ENCODE measurements at regions of chr2 and their contacts with region 1.

Region 1: DNA sequence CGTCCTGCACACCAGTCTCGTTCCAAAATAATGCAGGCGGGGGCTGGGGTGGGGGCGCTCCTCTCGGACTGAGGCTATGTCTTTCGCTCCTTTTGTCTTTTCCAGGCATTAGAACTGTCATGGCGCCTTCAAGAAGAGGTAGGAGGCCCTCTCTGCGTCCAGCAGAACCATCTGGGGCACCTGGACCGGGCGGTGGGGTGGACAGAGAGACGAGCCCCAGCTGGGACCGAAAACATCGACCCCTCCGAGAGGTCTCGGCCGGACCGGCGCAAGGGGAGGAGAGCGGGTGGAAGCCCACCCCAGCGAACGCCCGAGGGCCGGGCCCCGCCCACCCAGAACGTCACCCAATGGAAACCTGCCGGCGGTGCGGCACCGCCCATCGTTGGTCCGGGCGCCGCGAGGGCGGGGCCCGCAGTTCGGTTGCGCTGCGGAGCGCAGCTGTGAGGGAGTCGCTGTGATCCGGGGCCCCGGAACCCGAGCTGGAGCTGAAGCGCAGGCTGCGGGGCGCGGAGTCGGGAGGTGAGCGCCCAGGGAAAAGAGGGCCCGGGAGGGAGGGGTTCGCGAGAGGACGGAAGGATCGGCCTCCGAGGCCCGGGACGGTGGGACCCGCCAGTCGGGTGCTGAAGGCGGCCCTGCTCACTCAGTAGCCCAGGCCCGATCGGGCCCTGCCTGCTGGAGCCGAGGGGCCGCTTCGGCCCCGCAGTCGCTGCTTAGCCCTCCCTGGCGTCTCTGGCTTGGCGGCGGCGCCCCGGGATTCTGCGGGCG is at the start of gene NRBP1:
- DNase-seq: peak; percentile 91
- H3K4me3 Mint-ChIP-seq: peak within 1 kb of the TSS; percentile 98
- H3K27ac Mint-ChIP-seq: peak within 1 kb of the TSS; percentile 98
- H3K4me1 Mint-ChIP-seq: peaks cover 25% of the 10 kb centered on the region
- H3K27me3 Mint-ChIP-seq: no peaks in the 10 kb centered on the region
- total RNA-seq, gene NRBP1: 98.0 and 106 TPM in 2 replicates

Region 2: DNA sequence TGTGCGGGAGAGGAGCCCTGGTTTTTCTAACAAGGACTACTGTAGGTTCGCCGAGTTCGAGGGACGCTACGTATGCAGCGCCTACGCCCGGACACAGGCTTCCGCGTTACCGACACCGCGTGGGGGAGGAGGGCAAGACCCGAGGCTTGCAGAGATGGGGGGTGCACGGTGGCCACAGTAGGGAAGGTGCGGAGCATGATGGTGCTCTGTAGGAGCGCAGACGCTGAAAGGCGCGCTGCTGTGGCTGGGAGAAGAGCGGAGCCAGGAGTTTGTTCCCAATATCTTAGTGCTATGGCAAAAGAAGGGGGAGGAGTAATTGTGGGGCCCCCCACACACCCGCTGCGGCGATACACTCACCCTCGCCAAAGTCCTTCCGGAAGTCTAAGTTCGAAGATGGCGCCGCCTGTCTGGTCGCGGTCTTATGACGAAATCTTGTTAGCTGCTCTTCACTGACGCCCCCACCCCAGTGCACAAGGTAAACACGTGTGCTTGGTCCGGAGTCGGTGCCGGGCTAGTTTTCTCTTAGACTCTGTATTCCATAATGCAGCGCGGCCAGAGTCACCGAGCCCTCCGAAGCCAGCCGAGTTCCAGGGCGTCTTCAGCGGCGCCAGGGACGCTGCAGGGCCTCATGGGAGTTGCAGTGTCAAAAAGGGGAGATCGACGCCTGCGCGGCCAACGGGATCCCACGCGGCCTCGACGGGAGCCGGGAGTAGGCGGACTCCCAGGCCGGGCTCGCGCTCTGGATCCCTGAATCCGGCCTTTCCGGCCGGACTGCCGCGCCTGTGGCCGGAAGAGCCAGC is 71.8 kb before region 1 on chr2 and contains the start of gene GTF3C2:
- intact Hi-C with region 1: loop called (anchors 1 kb)
- DNase-seq: peak; percentile 90
- H3K4me3 Mint-ChIP-seq: peak within 1 kb of the TSS; percentile 100
- H3K27ac Mint-ChIP-seq: peak within 1 kb of the TSS; percentile 98
- H3K4me1 Mint-ChIP-seq: peaks cover 31% of the 10 kb centered on the region
- H3K27me3 Mint-ChIP-seq: no peaks in the 10 kb centered on the region
- total RNA-seq, gene GTF3C2: 65.8 and 66.9 TPM in 2 replicates

Region 3: GRCh38 chr2:27409321-27410073 is 18.9 kb before region 1 on chr2 and contains the start of gene PPM1G:
- intact Hi-C with region 1: loop called (anchors 1 kb)
- DNase-seq: peak; percentile 96
- H3K4me3 Mint-ChIP-seq: peak within 1 kb of the TSS; percentile 89
- H3K27ac Mint-ChIP-seq: peak within 1 kb of the TSS; percentile 88
- H3K4me1 Mint-ChIP-seq: peaks cover 20% of the 10 kb centered on the region
- H3K27me3 Mint-ChIP-seq: peaks cover 3% of the 10 kb centered on the region
- total RNA-seq, gene PPM1G: 159 and 163 TPM in 2 replicates

Region 4: DNA sequence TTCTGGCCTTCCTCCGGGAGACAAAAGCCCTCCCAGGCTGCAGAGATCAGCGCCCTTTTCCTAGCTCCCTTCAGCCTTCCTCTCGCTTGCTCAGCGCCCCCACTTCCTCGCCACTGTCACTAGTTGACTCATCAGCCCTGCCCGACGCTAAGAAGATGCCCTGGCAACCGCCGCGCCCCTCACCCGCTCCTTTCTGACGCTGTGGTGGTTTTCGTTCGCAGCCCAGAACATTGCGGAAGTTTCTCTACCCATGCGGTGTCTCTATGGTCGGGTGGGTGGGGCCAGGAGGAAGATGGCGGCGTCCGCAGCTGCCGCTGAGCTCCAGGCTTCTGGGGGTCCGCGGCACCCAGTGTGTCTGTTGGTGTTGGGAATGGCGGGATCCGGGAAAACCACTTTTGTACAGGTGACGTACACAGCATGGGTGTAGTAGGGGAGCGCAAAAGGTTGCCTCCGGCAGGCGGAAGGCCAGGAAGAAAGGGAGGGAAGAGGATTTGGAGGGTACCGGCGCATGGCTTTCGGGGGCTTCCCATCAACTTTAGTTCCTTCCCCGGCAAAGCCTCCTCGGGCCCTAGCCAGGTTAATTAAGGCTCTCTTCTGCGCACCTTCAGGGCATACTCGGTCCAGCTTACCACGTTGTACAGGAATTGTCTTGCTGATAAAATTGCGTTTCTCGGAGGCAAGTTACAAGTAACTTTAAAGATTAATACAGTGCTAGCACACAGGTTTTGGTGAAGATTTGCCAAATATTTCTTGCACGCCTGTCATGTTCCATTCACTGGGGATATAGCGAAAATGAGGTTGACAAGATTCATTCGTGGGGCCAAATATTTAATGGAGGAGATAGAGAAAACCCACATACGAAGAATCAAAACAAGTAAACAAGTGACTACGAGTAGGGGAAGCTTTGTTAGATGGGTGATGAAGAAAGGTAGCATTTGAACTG is 200.6 kb after region 1 on chr2 and contains the starts of genes CCDC121 and GPN1:
- intact Hi-C with region 1: loop called (anchors 2 kb)
- DNase-seq: peak; percentile 95
- H3K4me3 Mint-ChIP-seq: no peak within 1 kb of the TSS
- H3K27ac Mint-ChIP-seq: peak within 1 kb of the TSS; percentile 38
- H3K4me1 Mint-ChIP-seq: peaks cover 29% of the 10 kb centered on the region
- H3K27me3 Mint-ChIP-seq: no peaks in the 10 kb centered on the region
- total RNA-seq, gene CCDC121: 0.57 and 0.73 TPM in 2 replicates
- total RNA-seq, gene GPN1: 54.3 and 55.9 TPM in 2 replicates

Region 5: GRCh38 chr2:27683390-27684071 is 255.1 kb after region 1 on chr2:
- intact Hi-C with region 1: loop called (anchors 5 kb)
- DNase-seq: peak; percentile 78
- H3K4me3 Mint-ChIP-seq: no peak overlapping the region
- H3K27ac Mint-ChIP-seq: peak overlapping the region; percentile 77
- H3K4me1 Mint-ChIP-seq: peaks cover 31% of the 10 kb centered on the region
- H3K27me3 Mint-ChIP-seq: no peaks in the 10 kb centered on the region

Region 6: GRCh38 chr2:27752551-27753237 is 324.3 kb after region 1 on chr2:
- intact Hi-C with region 1: no loop called
- DNase-seq: no peak
- H3K4me3 Mint-ChIP-seq: no peak overlapping the region
- H3K27ac Mint-ChIP-seq: no peak overlapping the region
- H3K4me1 Mint-ChIP-seq: peaks cover 2% of the 10 kb centered on the region
- H3K27me3 Mint-ChIP-seq: peaks cover 10% of the 10 kb centered on the region

Region 7: DNA sequence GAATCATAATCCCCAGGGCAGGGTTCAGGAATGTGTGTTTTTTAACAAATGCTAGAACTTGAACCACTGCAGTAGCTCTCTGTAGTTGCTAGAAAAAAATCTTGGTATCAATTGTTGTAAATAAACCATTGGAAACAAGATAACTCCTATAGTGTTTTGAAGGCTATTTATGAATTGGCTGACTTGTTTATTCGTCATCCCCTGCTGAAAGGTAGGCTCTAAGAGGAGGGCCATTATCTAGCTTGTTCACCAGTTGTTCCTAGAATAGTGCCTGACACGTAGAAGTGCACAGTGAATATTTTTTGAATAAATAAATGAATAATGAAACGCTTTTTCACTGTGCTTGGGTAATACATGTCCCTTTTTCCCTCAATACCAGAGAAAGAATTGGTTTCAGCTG is 673.5 kb after region 1 on chr2:
- intact Hi-C with region 1: no loop called
- DNase-seq: no peak
- H3K4me3 Mint-ChIP-seq: no peak overlapping the region
- H3K27ac Mint-ChIP-seq: no peak overlapping the region
- H3K4me1 Mint-ChIP-seq: peaks cover 6% of the 10 kb centered on the region
- H3K27me3 Mint-ChIP-seq: no peaks in the 10 kb centered on the region